Cardiac septum (tissue), 1 donor: ENCODE measurements at regions of chr10 and their contacts with region 1.

Region 1: DNA sequence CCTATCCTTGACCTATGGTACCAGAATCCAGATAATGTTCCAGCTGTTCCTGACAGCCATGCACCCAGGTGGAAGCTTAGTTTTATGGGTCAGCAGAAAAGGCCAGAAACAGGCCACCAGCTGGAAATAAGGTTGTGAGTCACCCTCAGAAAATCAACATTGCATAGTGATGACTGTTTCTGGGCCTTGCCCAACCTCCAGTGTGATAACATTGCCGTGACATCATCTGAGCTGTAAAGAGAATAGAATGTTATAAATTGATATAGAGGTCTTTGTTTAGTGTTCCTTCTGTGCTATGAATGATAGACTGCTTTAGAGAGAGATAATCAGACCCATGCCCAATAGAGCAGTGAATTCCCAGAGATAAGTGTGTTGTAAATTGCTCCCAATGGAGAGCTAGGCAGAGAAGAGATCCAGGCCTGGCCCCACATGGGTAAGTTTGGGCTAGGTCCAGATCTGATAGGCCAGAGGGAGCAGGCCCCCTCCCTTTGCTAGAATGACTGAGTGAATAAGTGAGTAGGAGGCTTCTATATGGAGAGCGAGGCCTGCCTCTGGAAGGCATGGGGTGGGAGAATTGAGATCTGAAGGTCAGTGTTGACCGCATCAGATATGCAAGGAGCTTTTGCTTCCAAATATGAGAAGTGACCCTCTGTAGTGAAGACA is 14.2 kb upstream of the HPS1 start:
- DNase-seq: no peak

Region 2: GRCh38 chr10:98269072-98269912 is 191.7 kb before region 1 on chr10:
- intact Hi-C with region 1: loop called (anchors 5 kb)
- DNase-seq: peak; percentile 93

Region 3: GRCh38 chr10:98404571-98405359 is 56.2 kb before region 1 on chr10:
- intact Hi-C with region 1: no loop called
- DNase-seq: no peak